H1 (cell line): ENCODE measurements at regions of chr4 and their contacts with region 1.

Region 1: DNA sequence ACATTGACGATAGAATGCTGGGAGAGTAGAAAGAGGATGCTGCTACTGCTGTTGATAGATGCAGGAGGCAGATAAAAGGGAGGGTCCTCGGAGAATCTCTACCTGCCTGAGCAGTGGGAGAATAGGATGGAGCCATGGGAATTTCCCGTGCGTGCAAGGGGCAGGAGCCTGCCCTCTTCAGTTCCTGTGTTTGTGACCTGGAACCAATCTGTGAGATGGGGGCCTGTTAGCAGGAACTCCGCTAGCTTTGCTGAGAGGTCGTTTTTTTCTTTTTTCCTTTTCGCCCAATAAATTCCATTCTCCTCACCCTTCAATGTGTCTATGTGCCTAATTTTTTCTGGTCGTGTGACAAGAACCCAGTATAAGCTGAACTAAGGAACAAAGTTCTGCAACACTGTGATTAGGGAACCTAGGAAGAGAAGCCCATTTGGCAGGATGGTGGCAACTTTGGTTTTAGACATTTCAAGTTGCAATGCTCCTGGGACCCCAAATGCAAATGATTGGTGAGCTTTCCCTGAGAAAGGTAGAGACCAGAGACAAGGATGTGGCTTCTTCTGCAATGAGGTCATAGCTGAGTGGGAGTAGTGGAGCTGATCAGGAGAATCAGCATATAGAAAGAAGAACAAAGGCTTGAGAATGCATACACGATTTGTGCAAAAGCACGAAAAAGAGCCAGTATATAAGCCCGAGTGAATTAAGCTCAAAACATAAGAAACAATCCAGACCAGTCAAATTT is 23.9 kb downstream of the SLC39A8 start:
- DNase-seq: no peak
- H3K4me3 ChIP-seq: no peak overlapping the region
- H3K27ac ChIP-seq: no peak overlapping the region
- H3K4me1 ChIP-seq: peaks cover 1 to 23% (median 19%) of the 10 kb centered on the region in 4 experiments; a peak in 6 of 7 replicates
- H3K27me3 ChIP-seq: no peaks in the 10 kb centered on the region
- CTCF ChIP-seq: no peak
- EP300 ChIP-seq: no peak
- POLR2A ChIP-seq: no peak
- RAD21 ChIP-seq: no peak

Region 2: DNA sequence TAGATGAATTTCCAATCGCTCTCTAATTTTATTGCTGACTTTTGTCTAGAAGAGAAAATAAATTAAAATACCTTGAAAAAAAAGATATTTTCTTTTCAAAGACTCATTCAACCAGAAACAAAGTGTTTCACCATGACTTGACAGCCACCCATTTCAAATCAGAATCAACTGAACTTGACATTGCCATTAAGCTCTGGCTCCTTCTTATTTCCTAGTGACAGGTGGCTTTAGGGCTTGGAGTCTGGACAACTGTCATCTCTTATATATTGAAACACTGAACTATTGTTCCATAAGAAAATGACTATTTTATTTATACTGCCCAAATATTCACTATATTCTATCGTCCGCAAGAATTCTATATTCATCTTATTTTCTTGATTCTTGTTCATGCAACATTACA is 205.3 kb before region 1 on chr4:
- CTCF ChIA-PET with region 1: no interaction called
- POLR2A ChIA-PET with region 1: no interaction called
- DNase-seq: no peak
- H3K4me3 ChIP-seq: no peak overlapping the region
- H3K27ac ChIP-seq: no peak overlapping the region
- H3K4me1 ChIP-seq: no peaks in the 10 kb centered on the region
- H3K27me3 ChIP-seq: no peaks in the 10 kb centered on the region
- CTCF ChIP-seq: no peak
- EP300 ChIP-seq: no peak
- POLR2A ChIP-seq: no peak
- RAD21 ChIP-seq: no peak

Region 3: DNA sequence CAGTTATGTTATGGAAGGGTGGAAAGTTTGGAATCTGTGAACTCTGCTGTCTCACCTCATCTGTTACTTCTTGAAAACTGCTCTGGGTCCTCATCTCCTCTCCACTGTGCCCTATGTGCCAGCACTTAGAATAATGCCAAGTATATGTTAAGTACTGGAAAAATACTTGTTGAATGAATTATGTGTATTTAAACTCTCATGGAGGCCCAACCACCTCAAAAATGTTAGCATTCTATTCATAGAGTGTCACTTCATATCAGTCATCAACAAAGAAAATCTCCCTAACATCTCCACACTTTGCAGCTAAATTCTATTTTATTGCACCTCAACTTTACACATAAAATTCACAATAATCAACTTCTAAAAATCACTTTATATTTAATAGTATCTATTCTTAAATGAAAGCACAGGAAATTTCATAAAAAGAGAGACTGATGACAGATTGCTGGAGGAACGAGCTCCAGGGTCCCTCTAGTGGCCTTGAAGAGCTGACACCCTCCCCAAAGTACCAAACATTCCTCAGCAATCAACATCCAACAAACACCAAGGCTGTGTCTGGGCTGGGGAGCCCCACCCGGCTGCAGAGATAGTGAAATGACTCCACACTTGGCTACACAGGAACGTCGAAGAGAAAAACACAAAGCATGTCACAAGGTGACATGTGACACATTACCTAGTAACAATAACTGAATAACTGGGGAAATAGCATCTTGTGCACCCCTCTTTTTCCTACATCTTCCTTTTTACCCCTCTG is 21.9 kb before region 1 on chr4:
- CTCF ChIA-PET with region 1: interaction called, 10 read pairs
- POLR2A ChIA-PET with region 1: no interaction called
- DNase-seq: peak in 1 of 2 experiments; percentile 53
- H3K4me3 ChIP-seq: no peak overlapping the region
- H3K27ac ChIP-seq: no peak overlapping the region
- H3K4me1 ChIP-seq: peaks cover 0 to 3% (median 2%) of the 10 kb centered on the region in 4 experiments; a peak in 4 of 7 replicates
- H3K27me3 ChIP-seq: no peaks in the 10 kb centered on the region
- CTCF ChIP-seq: peak; percentile 61 to 74 (median 68)
- EP300 ChIP-seq: no peak
- POLR2A ChIP-seq: no peak
- RAD21 ChIP-seq: peak; percentile 69 to 71

Region 4: GRCh38 chr4:102333787-102334186 is 12.4 kb after region 1 on chr4:
- CTCF ChIA-PET with region 1: interaction called, 12 read pairs
- POLR2A ChIA-PET with region 1: interaction called, 5 read pairs
- DNase-seq: no peak
- H3K4me3 ChIP-seq: no peak overlapping the region
- H3K27ac ChIP-seq: no peak overlapping the region
- H3K4me1 ChIP-seq: no peaks in the 10 kb centered on the region
- H3K27me3 ChIP-seq: no peaks in the 10 kb centered on the region
- CTCF ChIP-seq: no peak
- EP300 ChIP-seq: no peak
- POLR2A ChIP-seq: no peak
- RAD21 ChIP-seq: no peak

Region 5: DNA sequence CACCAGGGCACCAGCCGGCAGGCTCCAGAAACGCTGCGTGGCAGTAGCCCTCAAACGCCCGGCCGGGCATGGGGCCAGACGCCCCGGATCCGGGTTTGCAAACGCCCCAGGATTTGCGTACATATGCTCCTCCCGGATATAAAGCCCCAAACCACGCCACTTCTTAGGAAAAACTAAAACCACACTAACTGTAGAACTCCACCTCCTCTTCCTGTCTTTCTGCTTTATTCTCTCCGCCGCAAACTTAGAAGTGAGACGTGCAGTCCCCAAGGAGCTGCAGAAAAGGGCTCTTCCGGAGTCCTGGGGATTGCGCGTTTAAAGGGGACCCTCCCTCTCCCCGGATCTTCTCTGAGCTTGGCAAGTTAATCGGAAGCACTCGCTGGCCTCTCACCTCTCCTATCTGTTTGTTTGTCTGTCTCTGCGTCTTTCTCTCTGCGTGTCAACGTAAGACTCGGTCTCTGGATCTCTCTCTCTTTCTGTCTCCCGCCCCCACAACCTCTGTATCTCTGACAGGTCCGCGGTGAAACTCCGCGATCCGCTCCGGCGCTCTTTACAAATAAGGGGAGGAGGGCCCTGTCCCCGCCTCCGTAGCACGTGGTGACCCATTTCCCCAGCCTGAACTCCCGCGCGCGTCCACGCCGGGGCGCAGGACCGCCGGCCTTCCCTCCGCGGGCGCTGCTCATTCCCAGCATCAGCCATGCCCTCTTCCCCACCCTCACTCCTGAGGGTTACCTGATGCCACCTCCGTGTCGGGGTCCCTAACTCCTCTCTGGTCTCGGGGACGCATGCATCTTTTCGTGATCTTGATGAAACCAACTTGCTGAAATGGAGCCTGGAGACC is 23.7 kb after region 1 on chr4 and contains the start of gene SLC39A8:
- CTCF ChIA-PET with region 1: interaction called, 11 read pairs
- POLR2A ChIA-PET with region 1: interaction called, 4 read pairs
- DNase-seq: peak; percentile 70 to 89
- H3K4me3 ChIP-seq: peak within 1 kb of the TSS; percentile 48 to 69 (median 62)
- H3K27ac ChIP-seq: no peak within 1 kb of the TSS
- H3K4me1 ChIP-seq: peaks cover 2 to 12% (median 8%) of the 10 kb centered on the region in 4 experiments; a peak in 6 of 7 replicates
- H3K27me3 ChIP-seq: peaks cover 0 to 15% (median 7%) of the 10 kb centered on the region in 4 experiments; a peak in 3 of 7 replicates
- CTCF ChIP-seq: peak; percentile 70 to 78 (median 72)
- EP300 ChIP-seq: no peak
- POLR2A ChIP-seq: peak in 1 of 2 experiments; percentile 51; a peak in 2 of 3 replicates
- RAD21 ChIP-seq: peak; percentile 72
- total RNA-seq, gene SLC39A8: 38.7 and 39.9 TPM in 2 replicates